Dorsolateral prefrontal cortex (tissue), 120 donors: ENCODE measurements at regions of chr21 and their contacts with region 1.

Region 1: DNA sequence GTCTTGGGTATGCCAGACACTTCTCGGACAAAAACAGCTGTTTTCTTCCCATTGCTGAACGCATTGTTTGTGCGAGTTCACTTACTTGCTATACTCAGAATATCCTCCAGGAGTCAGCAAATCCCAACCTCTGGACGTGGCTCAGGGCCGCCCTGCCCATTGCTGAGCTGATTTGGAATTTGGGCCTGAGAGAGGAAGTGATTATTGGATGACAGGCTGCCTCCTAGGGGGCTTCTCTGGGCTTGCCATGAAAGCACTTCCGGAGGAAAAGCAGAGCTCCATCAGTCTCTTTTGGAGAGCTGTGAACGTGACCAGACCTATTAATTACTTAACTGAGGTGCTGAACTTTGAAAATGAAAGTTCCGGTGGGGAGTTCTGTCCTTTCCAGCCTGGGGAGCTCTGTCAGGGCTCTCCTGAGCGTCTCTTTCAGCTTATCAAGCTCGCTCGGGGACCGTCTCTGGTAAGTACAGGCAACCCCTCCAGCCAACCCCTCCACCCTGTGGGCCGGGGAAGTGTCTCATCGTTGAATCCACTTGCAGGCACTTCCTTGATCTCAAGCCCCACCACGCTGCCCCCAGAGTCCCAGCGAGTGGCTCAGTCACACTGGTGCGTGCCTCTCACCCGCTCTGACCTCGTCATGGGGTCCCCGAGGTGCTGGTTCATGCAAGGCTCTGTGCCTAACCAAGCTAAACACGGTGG is 76.9 kb downstream of the CLIC6 start:
- DNase-seq: peak in 8 of 10 donors; percentile 5 to 59 (median 40)
- H3K4me3 ChIP-seq: peak overlapping the region in 14 of 59 donors; percentile 6 to 42 (median 16)
- H3K27ac ChIP-seq: no peak overlapping the region
- H3K27me3 ChIP-seq: peaks cover 0 to 18% (median 0%) of the 10 kb centered on the region in 45 donors
- CTCF ChIP-seq: peak; percentile 61 to 89 (median 78)

Region 2: GRCh38 chr21:34762761-34763160 is 17.1 kb after region 1 on chr21:
- intact Hi-C with region 1: no loop called
- DNase-seq: no peak
- H3K4me3 ChIP-seq: no peak overlapping the region
- H3K27ac ChIP-seq: no peak overlapping the region
- H3K27me3 ChIP-seq: peaks cover 0 to 4% (median 0%) of the 10 kb centered on the region in 45 donors
- CTCF ChIP-seq: no peak

Region 3: DNA sequence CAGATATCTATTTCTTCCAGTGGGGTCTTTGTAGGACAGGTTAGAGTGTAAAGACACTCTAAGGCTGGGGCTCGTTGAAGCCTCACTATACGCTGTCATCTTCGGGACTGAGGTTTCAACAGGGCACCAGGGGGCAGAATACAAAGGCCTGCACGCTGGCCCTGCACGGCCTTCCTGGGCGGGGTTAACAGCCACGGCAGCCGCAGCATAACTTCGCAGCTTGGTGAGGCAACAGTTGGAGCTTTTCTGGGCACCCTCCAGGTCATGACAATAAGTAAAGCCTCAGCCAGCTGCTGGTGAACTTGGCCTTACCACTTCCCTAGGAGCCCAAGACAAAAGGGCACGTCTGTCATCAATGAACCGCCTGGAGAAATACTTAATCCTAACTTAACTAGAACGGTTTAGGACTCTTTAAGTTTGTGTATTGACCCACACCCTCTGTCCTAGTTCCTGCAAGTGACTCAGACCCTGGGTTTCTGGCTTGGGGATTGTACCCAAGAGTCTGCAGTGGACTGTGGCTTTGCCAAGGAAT is 305.6 kb after region 1 on chr21:
- intact Hi-C with region 1: loop called in 1 of 2 experiments (anchors 10 kb)
- DNase-seq: peak in 9 of 10 donors; percentile 30 to 67 (median 55)
- H3K4me3 ChIP-seq: no peak overlapping the region
- H3K27ac ChIP-seq: peak overlapping the region in 4 of 59 donors; percentile 11 to 46 (median 16)
- H3K27me3 ChIP-seq: peaks cover 0 to 28% (median 7%) of the 10 kb centered on the region in 45 donors
- CTCF ChIP-seq: peak in 51 of 56 donors; percentile 18 to 73 (median 47)

Region 4: DNA sequence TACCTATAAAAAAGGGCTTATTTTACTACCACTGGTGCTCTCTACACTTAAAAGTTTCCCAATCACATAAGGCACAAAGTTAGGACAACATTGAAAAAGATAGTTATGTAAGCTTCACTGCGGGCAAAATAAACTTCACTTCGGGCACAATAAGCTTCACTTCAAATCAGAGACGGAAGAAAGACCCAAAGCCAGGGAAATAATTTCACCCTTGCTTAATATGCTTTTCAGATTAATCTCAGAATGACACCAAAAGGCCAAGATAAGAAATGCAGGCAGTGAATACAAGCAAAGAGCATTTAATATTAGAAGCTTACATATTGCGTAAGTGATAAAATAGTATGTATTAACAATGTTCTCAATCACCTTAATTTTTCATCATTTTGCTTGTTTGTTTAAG is 870.4 kb after region 1 on chr21:
- intact Hi-C with region 1: loop called in 1 of 2 experiments (anchors 10 kb)
- DNase-seq: no peak
- H3K4me3 ChIP-seq: no peak overlapping the region
- H3K27ac ChIP-seq: no peak overlapping the region
- H3K27me3 ChIP-seq: peaks cover 0 to 6% (median 0%) of the 10 kb centered on the region in 45 donors
- CTCF ChIP-seq: peak in 54 of 56 donors; percentile 11 to 78 (median 46)

Region 5: GRCh38 chr21:35840197-35840799 is 1094.6 kb after region 1 on chr21:
- intact Hi-C with region 1: loop called (anchors 2 to 10 kb)
- DNase-seq: peak in 5 of 10 donors; percentile 13 to 77 (median 35)
- H3K4me3 ChIP-seq: no peak overlapping the region
- H3K27ac ChIP-seq: no peak overlapping the region
- H3K27me3 ChIP-seq: peaks cover 0 to 3% (median 0%) of the 10 kb centered on the region in 45 donors
- CTCF ChIP-seq: peak; percentile 55 to 95 (median 79)

Region 6: GRCh38 chr21:35940074-35940927 is 1194.6 kb after region 1 on chr21:
- intact Hi-C with region 1: loop called in 1 of 2 experiments (anchors 2 kb)
- DNase-seq: peak in 6 of 10 donors; percentile 14 to 59 (median 46)
- H3K4me3 ChIP-seq: peak overlapping the region in 31 of 59 donors; percentile 10 to 59 (median 27)
- H3K27ac ChIP-seq: no peak overlapping the region
- H3K27me3 ChIP-seq: peaks cover 0 to 5% (median 0%) of the 10 kb centered on the region in 45 donors
- CTCF ChIP-seq: peak in 55 of 56 donors; percentile 45 to 84 (median 67)

Region 7: DNA sequence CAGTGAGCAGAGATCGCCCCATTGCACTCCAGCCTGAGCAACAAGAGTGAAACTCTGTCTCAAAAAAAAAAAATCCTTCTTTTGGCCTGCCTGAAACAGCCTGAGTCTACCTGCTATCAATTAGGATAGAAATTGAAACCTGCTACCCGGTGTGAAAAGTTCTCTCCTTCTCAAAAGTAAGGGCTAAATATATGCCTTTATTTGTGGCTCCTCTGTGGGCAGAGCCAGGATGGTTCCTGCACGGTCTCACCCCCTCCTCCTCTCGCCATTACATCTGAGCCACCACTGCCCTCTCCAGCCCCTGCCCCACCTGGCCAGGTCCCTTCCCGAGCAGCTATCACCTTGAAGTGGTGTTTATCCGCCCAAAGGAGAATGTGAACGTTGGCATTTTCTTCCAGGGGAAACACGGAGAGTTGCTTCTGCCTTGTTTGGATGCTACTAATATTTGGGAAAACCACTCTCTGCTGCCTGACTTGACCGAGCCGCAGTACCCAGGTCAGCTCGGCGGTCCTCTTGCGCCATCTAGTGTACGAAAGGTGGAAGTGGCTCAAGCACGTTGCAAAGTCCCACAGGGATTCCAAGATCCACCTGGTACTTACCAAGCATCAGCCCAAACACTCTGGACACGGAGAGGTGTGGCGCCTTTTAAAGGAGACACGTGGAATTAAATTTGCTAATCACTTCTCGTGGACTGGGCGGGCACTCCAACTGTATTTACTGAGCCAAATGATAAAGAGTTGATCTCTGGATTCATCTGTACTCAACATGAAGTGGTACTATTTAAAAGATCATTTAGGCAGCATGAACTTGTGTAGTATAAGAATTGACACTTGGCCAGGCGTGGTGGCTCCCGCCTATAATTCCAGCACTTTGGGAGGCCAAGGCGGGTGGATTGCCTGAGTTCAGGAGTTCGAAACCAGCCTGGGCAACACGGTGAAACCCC is 1282.7 kb after region 1 on chr21:
- intact Hi-C with region 1: loop called (anchors 5 to 10 kb)
- DNase-seq: peak; percentile 64 to 87 (median 76)
- H3K4me3 ChIP-seq: no peak overlapping the region
- H3K27ac ChIP-seq: no peak overlapping the region
- H3K27me3 ChIP-seq: no peaks in the 10 kb centered on the region
- CTCF ChIP-seq: peak; percentile 73 to 97 (median 94)